Activated CD4-positive, alpha-beta memory T cell treated with anti-CD3 and anti-CD28 coated beads, Interleukin-2, amount 10 ng/mL, durations not matched to agents 7 days and 5 days (primary cell): ENCODE measurements at regions of chr6 and their contacts with region 1.

Region 1: GRCh38 chr6:41941280-41942066 is at the start of gene CCND3:
- DNase-seq: peak; percentile 92
- H3K4me3 Mint-ChIP-seq: peak within 1 kb of the TSS; percentile 100
- H3K27ac Mint-ChIP-seq: peak within 1 kb of the TSS; percentile 93
- H3K4me1 Mint-ChIP-seq: peaks cover 38% of the 10 kb centered on the region
- H3K27me3 Mint-ChIP-seq: no peaks in the 10 kb centered on the region
- total RNA-seq, gene CCND3: 456 to 464 TPM

Region 2: DNA sequence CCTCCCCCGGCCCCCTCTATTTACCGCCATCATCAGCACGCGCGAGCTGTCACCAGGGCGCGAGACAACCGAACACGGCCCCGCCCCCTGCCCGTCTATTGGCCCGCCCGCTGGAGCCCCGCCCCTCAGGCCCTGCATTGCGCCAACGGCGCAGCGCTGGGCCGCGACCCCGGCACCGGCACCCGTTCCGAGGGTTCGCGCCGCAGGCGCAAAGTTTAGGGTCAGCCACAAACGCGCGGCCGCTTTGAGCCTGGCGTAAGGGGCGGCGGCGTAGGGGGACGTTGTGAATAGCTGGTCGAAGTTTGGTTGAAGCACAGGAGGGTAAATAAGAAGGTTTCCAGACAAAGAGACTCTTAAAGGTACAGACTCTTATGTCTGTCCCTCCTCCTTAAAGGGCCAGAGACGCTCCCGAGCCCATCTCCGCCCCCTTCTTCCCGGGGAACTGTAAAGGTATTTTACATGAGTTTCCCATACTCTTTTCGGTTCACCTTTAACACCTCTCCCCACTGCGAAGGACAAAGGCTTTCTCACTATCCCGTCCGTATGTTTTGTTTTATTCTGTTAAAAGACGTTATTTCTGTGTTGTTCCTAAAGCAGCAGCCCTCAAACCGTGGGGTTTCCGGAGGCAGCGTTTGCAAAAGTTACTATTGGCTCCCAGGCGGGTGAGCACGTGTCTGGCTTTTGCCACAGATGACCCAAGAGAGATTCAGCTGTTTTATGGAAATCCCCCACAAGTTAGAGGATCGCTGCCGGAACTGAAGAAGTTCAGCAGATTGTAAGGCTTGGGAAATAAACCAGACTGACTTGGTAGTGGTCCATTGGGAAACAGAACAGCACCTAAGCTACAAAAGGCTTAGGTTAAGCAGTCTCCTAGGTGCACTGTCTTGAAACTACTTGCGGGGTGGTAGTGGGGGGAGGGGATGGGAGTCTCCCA is 45.9 kb before region 1 on chr6 and contains the start of gene USP49:
- CTCF ChIA-PET with region 1: interaction called, 6 read pairs
- POLR2A ChIA-PET with region 1: interaction called, 14 read pairs
- DNase-seq: peak; percentile 91
- H3K4me3 Mint-ChIP-seq: no peak within 1 kb of the TSS
- H3K27ac Mint-ChIP-seq: peak within 1 kb of the TSS; percentile 66
- H3K4me1 Mint-ChIP-seq: peaks cover 15% of the 10 kb centered on the region
- H3K27me3 Mint-ChIP-seq: no peaks in the 10 kb centered on the region
- total RNA-seq, gene USP49: 6.8 to 7.3 TPM

Region 3: GRCh38 chr6:41929924-41930323 is 11.5 kb before region 1 on chr6:
- CTCF ChIA-PET with region 1: interaction called, 192 read pairs
- POLR2A ChIA-PET with region 1: interaction called, 191 read pairs
- DNase-seq: no peak
- H3K4me3 Mint-ChIP-seq: no peak overlapping the region
- H3K27ac Mint-ChIP-seq: no peak overlapping the region
- H3K4me1 Mint-ChIP-seq: peaks cover 34% of the 10 kb centered on the region
- H3K27me3 Mint-ChIP-seq: no peaks in the 10 kb centered on the region

Region 4: GRCh38 chr6:41984623-41985022 is 43.1 kb after region 1 on chr6:
- CTCF ChIA-PET with region 1: no interaction called
- POLR2A ChIA-PET with region 1: no interaction called
- DNase-seq: no peak
- H3K4me3 Mint-ChIP-seq: no peak overlapping the region
- H3K27ac Mint-ChIP-seq: no peak overlapping the region
- H3K4me1 Mint-ChIP-seq: peaks cover 10% of the 10 kb centered on the region
- H3K27me3 Mint-ChIP-seq: no peaks in the 10 kb centered on the region

Region 5: GRCh38 chr6:42021847-42022754 is 80.6 kb after region 1 on chr6:
- CTCF ChIA-PET with region 1: interaction called, 11 read pairs
- POLR2A ChIA-PET with region 1: interaction called, 81 read pairs
- DNase-seq: peak; percentile 80
- H3K4me3 Mint-ChIP-seq: peak overlapping the region; percentile 65
- H3K27ac Mint-ChIP-seq: peak overlapping the region; percentile 95
- H3K4me1 Mint-ChIP-seq: peaks cover 74% of the 10 kb centered on the region
- H3K27me3 Mint-ChIP-seq: no peaks in the 10 kb centered on the region

Region 6: DNA sequence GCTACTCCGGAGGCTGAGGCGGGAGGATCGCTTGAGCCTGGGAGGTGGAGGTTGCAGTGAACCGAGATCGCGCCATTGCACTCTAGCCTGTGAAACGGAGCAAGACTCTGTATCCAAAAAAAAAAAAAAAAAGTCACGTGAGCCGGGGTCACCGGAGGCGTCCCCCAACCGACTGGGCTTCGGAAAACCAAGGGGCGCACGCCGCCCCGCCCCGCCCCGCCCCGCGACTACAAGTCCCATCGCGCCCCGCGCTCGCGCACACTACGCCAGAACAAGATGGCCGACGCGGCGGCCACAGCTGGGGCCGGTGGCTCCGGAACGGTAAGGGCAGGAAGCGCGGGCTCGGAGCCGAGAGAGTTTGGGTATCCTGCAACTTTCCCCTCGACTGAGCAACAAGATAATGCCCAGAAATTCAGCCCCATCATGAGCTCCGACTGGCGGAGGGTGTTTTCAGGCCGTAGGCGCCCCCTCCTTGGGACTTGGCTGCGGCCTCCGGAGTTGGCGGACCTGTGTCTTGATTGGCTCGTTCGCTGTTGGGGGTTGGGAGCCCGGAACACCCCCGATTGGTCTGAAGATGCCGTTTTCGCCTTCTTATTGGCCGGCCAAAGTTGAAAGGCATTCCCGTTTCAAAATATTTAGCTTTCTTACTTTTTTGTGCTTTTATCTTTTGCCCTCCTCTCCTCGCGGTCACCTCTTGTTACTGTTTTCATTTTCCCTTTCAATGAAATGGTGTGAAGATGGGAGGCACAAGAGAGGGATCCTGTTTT is 109.0 kb after region 1 on chr6 and contains the start of gene TAF8:
- CTCF ChIA-PET with region 1: interaction called, 383 read pairs
- POLR2A ChIA-PET with region 1: interaction called, 553 read pairs
- DNase-seq: peak; percentile 91
- H3K4me3 Mint-ChIP-seq: peak within 1 kb of the TSS; percentile 82
- H3K27ac Mint-ChIP-seq: peak within 1 kb of the TSS; percentile 94
- H3K4me1 Mint-ChIP-seq: peaks cover 75% of the 10 kb centered on the region
- H3K27me3 Mint-ChIP-seq: no peaks in the 10 kb centered on the region
- total RNA-seq, gene TAF8: 48.0 to 55.1 TPM